CD4-positive, alpha-beta T cell (primary cell): ENCODE measurements at regions of chr3 and their contacts with region 1.

Region 1: GRCh38 chr3:15439476-15439875 is 12.1 kb downstream of the EAF1 start:
- DNase-seq: no peak
- ATAC-seq: no peak
- H3K4me3 ChIP-seq: no peak overlapping the region
- H3K4me3 Mint-ChIP-seq: no peak overlapping the region
- H3K27ac ChIP-seq: no peak overlapping the region
- H3K27ac Mint-ChIP-seq: no peak overlapping the region
- H3K4me1 ChIP-seq: peaks cover 4% of the 10 kb centered on the region
- H3K4me1 Mint-ChIP-seq: no peaks in the 10 kb centered on the region
- H3K27me3 ChIP-seq: no peaks in the 10 kb centered on the region
- H3K27me3 Mint-ChIP-seq: no peaks in the 10 kb centered on the region
- CTCF ChIP-seq: no peak

Region 2: GRCh38 chr3:14660907-14661306 is 778.6 kb before region 1 on chr3:
- CTCF ChIA-PET with region 1: no interaction called
- POLR2A ChIA-PET with region 1: no interaction called
- intact Hi-C with region 1: loop called in 1 of 2 experiments (anchors 10 kb)
- DNase-seq: no peak
- ATAC-seq: no peak
- H3K4me3 ChIP-seq: no peak overlapping the region
- H3K4me3 Mint-ChIP-seq: no peak overlapping the region
- H3K27ac ChIP-seq: no peak overlapping the region
- H3K27ac Mint-ChIP-seq: no peak overlapping the region
- H3K4me1 ChIP-seq: no peaks in the 10 kb centered on the region
- H3K4me1 Mint-ChIP-seq: peaks cover 25% of the 10 kb centered on the region
- H3K27me3 ChIP-seq: no peaks in the 10 kb centered on the region
- H3K27me3 Mint-ChIP-seq: no peaks in the 10 kb centered on the region
- CTCF ChIP-seq: no peak

Region 3: DNA sequence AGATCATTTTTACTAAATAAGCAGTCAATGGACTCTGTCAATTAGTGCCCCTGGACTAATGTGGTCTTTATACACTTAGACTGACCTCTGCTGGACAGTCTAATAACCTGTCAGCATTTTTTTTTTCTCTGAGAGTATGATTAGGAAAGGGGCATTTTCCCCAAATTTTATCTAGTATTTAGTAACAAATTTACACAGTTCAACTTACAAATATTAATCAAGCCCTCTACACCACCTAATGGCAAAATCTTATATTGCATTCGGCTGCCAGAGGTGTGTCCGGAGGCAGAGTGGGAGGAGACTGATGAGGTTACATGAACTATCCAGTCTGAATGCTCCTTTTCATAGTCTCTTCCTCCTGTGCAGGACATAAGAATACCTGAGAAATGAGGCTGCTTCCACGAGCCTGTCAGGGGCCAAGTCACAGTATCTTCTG is 118.1 kb after region 1 on chr3:
- CTCF ChIA-PET with region 1: no interaction called
- POLR2A ChIA-PET with region 1: no interaction called
- intact Hi-C with region 1: loop called in 1 of 2 experiments (anchors 10 kb)
- DNase-seq: peak; percentile 17 to 90 (median 38)
- ATAC-seq: peak; percentile 99
- H3K4me3 ChIP-seq: no peak overlapping the region
- H3K4me3 Mint-ChIP-seq: no peak overlapping the region
- H3K27ac ChIP-seq: no peak overlapping the region
- H3K27ac Mint-ChIP-seq: no peak overlapping the region
- H3K4me1 ChIP-seq: peaks cover 10% of the 10 kb centered on the region
- H3K4me1 Mint-ChIP-seq: peaks cover 13% of the 10 kb centered on the region
- H3K27me3 ChIP-seq: no peaks in the 10 kb centered on the region
- H3K27me3 Mint-ChIP-seq: no peaks in the 10 kb centered on the region
- CTCF ChIP-seq: peak; percentile 77

Region 4: DNA sequence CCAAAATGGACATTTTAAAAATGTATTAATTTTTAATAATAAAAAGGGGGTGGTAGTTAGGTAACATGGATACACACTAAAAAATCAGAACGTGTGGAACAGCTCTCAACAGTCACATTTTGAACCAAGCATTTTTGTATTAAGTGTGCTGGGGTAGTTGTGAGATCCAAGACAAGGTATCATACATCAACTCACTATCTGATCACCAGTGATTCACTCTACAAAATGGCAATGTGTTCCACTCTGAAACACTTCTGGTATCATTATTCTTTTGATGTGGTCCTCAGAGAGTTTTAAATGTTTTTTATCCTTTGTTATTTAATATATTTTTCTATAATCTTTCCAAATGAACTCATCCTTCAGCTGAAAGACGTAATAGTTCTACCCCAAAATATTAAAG is 156.5 kb after region 1 on chr3:
- CTCF ChIA-PET with region 1: no interaction called
- POLR2A ChIA-PET with region 1: no interaction called
- intact Hi-C with region 1: loop called in 1 of 2 experiments (anchors 5 kb)
- DNase-seq: no peak
- ATAC-seq: no peak
- H3K4me3 ChIP-seq: no peak overlapping the region
- H3K4me3 Mint-ChIP-seq: no peak overlapping the region
- H3K27ac ChIP-seq: no peak overlapping the region
- H3K27ac Mint-ChIP-seq: no peak overlapping the region
- H3K4me1 ChIP-seq: peaks cover 18% of the 10 kb centered on the region
- H3K4me1 Mint-ChIP-seq: peaks cover 37% of the 10 kb centered on the region
- H3K27me3 ChIP-seq: no peaks in the 10 kb centered on the region
- H3K27me3 Mint-ChIP-seq: no peaks in the 10 kb centered on the region
- CTCF ChIP-seq: no peak